Caco-2 (cell line): ENCODE measurements at regions of chr2 and their contacts with region 1.

Region 1: GRCh38 chr2:79219383-79219988 is 59.9 kb upstream of the REG3A start:
- DNase-seq: peak; percentile 60 to 67
- H3K4me3 ChIP-seq: no peak overlapping the region
- H3K4me3 Mint-ChIP-seq: no peak overlapping the region
- H3K27ac Mint-ChIP-seq: no peak overlapping the region
- H3K4me1 ChIP-seq: no peaks in the 10 kb centered on the region
- H3K4me1 Mint-ChIP-seq: no peaks in the 10 kb centered on the region
- H3K27me3 ChIP-seq: no peaks in the 10 kb centered on the region
- H3K27me3 Mint-ChIP-seq: no peaks in the 10 kb centered on the region
- CTCF ChIP-seq: peak; percentile 79 to 89

Region 2: DNA sequence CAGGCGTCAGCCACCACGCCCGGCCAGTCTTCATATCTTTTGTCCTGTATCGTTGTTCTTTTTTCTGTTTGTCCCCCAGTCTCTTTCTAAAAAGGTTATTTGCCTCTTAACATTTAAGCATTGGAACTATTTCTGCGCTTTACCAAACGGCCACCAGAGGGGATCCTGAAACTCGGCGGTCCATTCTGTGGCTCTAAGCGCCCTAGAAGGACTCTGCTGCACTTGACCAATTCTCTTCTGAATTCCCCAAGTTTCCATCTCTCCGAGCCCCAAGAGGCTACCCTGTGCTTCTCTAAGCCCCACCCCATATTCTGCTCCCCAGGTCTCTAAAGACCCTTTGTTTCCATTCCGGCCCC is 227.1 kb before region 1 on chr2:
- CTCF ChIA-PET with region 1: no interaction called
- POLR2A ChIA-PET with region 1: no interaction called
- intact Hi-C with region 1: loop called (anchors 1 kb)
- DNase-seq: peak; percentile 48 to 53
- H3K4me3 ChIP-seq: peak overlapping the region; percentile 28
- H3K4me3 Mint-ChIP-seq: peak overlapping the region; percentile 70
- H3K27ac Mint-ChIP-seq: no peak overlapping the region
- H3K4me1 ChIP-seq: no peaks in the 10 kb centered on the region; the same call in 1 of the 2 replicates
- H3K4me1 Mint-ChIP-seq: no peaks in the 10 kb centered on the region
- H3K27me3 ChIP-seq: peaks cover 1% of the 10 kb centered on the region
- H3K27me3 Mint-ChIP-seq: peaks cover 20% of the 10 kb centered on the region
- CTCF ChIP-seq: peak; percentile 62 to 67

Region 3: DNA sequence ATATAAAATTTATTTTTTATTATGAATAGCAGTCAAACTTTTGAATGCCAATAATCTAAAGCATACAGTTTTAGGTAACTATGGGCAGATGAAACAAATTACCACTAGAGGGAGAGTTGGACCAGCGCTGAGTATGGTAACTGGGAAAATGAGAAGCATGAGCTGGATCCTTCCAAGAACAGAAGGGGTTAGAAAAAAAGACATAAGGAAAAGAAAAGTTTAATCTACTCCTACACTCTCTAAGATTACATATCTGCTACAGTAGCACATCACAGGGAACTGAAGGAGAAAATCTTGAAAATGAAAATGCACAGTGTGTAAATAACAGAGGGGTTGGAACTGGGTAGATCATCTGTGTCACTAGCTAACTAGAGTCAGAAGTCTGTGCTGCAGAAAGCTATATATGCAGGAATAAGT is 178.4 kb before region 1 on chr2:
- CTCF ChIA-PET with region 1: interaction called, 5 read pairs
- POLR2A ChIA-PET with region 1: no interaction called
- intact Hi-C with region 1: loop called (anchors 1 kb)
- DNase-seq: peak in 1 of 2 experiments; percentile 18
- H3K4me3 ChIP-seq: no peak overlapping the region
- H3K4me3 Mint-ChIP-seq: no peak overlapping the region
- H3K27ac Mint-ChIP-seq: no peak overlapping the region
- H3K4me1 ChIP-seq: no peaks in the 10 kb centered on the region
- H3K4me1 Mint-ChIP-seq: no peaks in the 10 kb centered on the region
- H3K27me3 ChIP-seq: no peaks in the 10 kb centered on the region
- H3K27me3 Mint-ChIP-seq: peaks cover 6% of the 10 kb centered on the region
- CTCF ChIP-seq: peak; percentile 66 to 75

Region 4: DNA sequence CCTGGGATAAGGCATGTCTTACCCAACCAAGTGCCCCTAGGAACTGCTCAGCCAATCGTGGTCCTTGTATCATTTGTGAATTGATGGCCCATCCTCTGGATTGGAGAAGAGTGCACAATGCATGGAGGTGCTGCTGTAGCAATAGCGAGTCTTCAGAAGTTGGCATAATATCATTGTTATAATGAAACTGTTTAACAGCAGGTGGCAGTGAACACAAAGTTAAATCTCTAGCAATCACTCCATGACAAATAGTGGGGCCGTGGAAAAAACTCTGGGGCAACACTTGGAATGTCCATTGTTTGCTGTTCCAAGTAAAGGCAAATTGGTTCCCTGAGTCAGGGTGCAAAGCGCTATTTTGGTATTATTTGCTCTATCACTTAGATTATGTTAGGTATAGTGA is 87.8 kb before region 1 on chr2:
- CTCF ChIA-PET with region 1: no interaction called
- POLR2A ChIA-PET with region 1: no interaction called
- intact Hi-C with region 1: loop called (anchors 1 kb)
- DNase-seq: no peak
- H3K4me3 ChIP-seq: no peak overlapping the region
- H3K4me3 Mint-ChIP-seq: no peak overlapping the region
- H3K27ac Mint-ChIP-seq: no peak overlapping the region
- H3K4me1 ChIP-seq: no peaks in the 10 kb centered on the region
- H3K4me1 Mint-ChIP-seq: no peaks in the 10 kb centered on the region
- H3K27me3 ChIP-seq: no peaks in the 10 kb centered on the region
- H3K27me3 Mint-ChIP-seq: peaks cover 4% of the 10 kb centered on the region
- CTCF ChIP-seq: no peak

Region 5: DNA sequence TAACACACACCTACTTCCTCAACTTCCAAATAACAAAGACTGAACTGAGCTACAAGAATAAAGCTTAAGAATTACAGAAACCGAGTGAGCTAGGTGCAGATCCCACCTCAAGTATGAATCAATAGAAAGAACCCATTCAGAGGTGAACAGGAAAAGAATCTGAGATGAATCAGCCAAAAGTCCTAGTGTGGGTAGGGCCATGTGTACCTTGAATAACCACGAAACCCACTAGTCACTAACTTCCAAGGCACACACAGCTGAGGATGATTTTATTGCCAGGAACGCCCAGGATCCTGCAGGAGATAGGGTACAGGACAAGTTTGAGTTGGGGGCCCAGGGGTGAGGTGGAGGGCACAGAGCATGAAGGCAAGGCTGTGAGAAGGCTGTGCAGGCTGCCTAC is 39.8 kb after region 1 on chr2:
- CTCF ChIA-PET with region 1: no interaction called
- POLR2A ChIA-PET with region 1: no interaction called
- intact Hi-C with region 1: no loop called
- DNase-seq: no peak
- H3K4me3 ChIP-seq: no peak overlapping the region
- H3K4me3 Mint-ChIP-seq: no peak overlapping the region
- H3K27ac Mint-ChIP-seq: no peak overlapping the region
- H3K4me1 ChIP-seq: no peaks in the 10 kb centered on the region
- H3K4me1 Mint-ChIP-seq: no peaks in the 10 kb centered on the region
- H3K27me3 ChIP-seq: no peaks in the 10 kb centered on the region
- H3K27me3 Mint-ChIP-seq: peaks cover 10% of the 10 kb centered on the region
- CTCF ChIP-seq: no peak

Region 6: GRCh38 chr2:79271456-79271855 is 52.0 kb after region 1 on chr2:
- CTCF ChIA-PET with region 1: no interaction called
- POLR2A ChIA-PET with region 1: no interaction called
- intact Hi-C with region 1: no loop called
- DNase-seq: peak; percentile 19 to 67
- H3K4me3 ChIP-seq: no peak overlapping the region
- H3K4me3 Mint-ChIP-seq: no peak overlapping the region
- H3K27ac Mint-ChIP-seq: no peak overlapping the region
- H3K4me1 ChIP-seq: peaks cover 5% of the 10 kb centered on the region; the same call in 1 of the 2 replicates
- H3K4me1 Mint-ChIP-seq: no peaks in the 10 kb centered on the region
- H3K27me3 ChIP-seq: no peaks in the 10 kb centered on the region
- H3K27me3 Mint-ChIP-seq: no peaks in the 10 kb centered on the region
- CTCF ChIP-seq: no peak

Region 7: GRCh38 chr2:79855264-79856006 is 635.9 kb after region 1 on chr2:
- CTCF ChIA-PET with region 1: no interaction called
- POLR2A ChIA-PET with region 1: no interaction called
- intact Hi-C with region 1: loop called (anchors 1 kb)
- DNase-seq: peak in 1 of 2 experiments; percentile 43
- H3K4me3 ChIP-seq: no peak overlapping the region
- H3K4me3 Mint-ChIP-seq: no peak overlapping the region
- H3K27ac Mint-ChIP-seq: no peak overlapping the region
- H3K4me1 ChIP-seq: no peaks in the 10 kb centered on the region
- H3K4me1 Mint-ChIP-seq: no peaks in the 10 kb centered on the region
- H3K27me3 ChIP-seq: no peaks in the 10 kb centered on the region
- H3K27me3 Mint-ChIP-seq: peaks cover 14% of the 10 kb centered on the region
- CTCF ChIP-seq: peak; percentile 34 to 60

Region 8: DNA sequence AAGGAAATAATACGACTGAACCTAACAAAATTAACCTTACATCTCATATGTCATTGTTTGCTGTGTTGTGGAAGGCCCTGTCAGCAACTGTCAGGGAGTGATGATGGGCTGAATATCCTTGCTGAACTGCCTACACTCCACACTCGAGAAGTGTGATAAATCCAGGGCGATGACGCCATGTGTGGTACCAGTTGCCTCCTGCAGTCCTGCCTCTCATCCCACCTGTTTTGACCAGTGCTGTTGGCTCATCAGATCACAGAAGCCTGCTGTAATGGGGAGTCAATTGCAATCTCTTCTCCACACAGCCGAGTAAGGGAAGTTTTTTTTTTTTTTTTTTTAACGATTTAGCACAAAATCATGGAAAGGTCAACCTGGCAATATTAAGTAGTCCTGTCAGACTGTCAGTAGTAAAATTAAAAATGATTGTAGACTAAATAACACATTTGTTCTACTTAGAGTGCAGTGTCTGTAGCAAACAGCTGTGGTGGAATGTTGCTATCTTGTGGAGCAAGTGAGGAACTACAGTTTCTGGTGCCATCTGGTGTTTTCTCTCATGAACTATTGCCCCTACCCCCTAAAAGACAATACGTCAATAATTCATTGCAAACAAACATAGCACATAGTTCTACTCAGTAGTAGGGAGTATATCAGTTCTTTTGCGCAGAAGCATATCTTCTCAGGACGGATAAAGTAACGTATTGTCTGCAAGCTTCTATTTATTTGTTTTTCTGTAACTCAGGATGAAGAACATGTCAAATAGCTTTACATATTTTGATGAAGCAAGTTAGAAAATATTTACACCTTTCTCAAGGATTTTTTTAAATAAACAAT is 641.0 kb after region 1 on chr2:
- CTCF ChIA-PET with region 1: no interaction called
- POLR2A ChIA-PET with region 1: no interaction called
- intact Hi-C with region 1: loop called (anchors 1 kb)
- DNase-seq: peak in 1 of 2 experiments; percentile 30
- H3K4me3 ChIP-seq: no peak overlapping the region
- H3K4me3 Mint-ChIP-seq: no peak overlapping the region
- H3K27ac Mint-ChIP-seq: no peak overlapping the region
- H3K4me1 ChIP-seq: no peaks in the 10 kb centered on the region
- H3K4me1 Mint-ChIP-seq: no peaks in the 10 kb centered on the region
- H3K27me3 ChIP-seq: no peaks in the 10 kb centered on the region
- H3K27me3 Mint-ChIP-seq: peaks cover 13% of the 10 kb centered on the region
- CTCF ChIP-seq: peak; percentile 65 to 74